ENCODE measurements at regions of chr6 and their contacts with region 1.

Region 1: DNA sequence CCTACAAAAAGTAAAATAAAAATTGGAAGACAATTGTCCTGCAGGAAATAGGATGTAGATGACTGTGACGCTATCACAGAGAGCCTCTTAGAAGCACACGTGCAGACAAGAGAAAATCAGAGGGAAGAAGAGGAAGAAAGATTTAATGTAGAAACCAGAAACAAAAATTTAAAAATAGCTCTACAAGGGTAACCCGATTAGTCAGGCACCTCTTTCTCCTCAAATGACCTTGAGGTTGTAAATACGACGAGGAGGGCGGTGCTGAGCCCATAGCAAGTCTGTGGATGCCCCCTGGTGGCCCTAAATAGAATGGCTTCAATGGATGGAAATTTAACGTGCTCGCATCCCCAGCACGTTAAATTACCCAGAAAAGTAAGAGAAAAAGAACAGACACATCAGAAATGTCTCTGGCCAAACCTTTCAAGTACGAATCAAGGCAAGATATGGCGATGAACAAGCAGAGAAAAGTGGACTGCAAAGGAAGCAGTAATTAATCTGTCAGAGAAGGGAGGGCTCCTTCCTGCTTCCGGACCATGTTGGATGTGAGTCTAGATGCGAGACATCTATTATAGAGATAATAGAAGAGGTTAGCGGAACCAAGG is 4.2 kb upstream of the PRPH2 start:
- DNase-seq: peak; percentile 64
- H3K4me3 ChIP-seq: peak overlapping the region; percentile 33 to 45 (median 39)
- H3K27ac ChIP-seq: no peak overlapping the region
- H3K4me1 ChIP-seq: peaks cover 13% of the 10 kb centered on the region
- H3K27me3 ChIP-seq: no peaks in the 10 kb centered on the region
- CTCF ChIP-seq: peak; percentile 81 to 88

Region 2: DNA sequence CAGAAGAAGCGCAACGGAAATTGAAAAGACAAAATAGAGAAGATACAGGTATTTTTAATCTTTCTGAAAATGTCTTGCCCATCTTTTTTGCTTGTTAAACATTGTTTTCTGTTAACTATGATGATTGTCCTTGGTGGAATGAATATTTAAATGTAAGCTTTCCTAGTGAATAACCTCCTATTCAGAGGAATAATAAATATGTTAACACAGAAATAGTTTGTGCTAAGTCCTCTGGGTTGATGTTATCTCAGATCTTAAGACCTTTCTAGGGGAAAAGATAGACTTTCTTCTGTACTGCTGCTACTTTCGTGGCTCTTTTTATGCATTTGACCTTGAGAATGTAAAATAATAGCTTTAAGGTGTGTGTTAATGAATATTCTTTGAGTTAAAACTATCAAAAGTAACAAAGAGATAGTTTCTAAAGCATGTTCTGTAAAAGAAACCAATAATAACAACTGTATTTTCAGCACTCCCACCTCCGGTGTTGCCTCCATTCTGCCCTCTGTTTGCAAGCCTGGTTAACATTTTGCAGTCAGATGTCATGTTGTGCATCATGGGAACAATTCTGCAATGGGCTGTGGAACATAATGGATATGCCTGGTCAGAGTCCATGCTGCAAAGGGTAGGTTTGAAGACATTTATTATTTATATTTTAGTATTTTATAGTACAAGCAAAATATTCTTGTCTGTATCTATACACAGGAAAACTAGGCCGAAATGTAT is 74.4 kb before region 1 on chr6:
- CTCF ChIA-PET with region 1: no interaction called
- dilution Hi-C with region 1: loop called (anchors 5 kb)
- in situ Hi-C with region 1: no loop called
- intact Hi-C with region 1: no loop called
- DNase-seq: no peak
- H3K4me3 ChIP-seq: no peak overlapping the region
- H3K27ac ChIP-seq: no peak overlapping the region
- H3K4me1 ChIP-seq: no peaks in the 10 kb centered on the region
- H3K27me3 ChIP-seq: no peaks in the 10 kb centered on the region
- CTCF ChIP-seq: no peak

Region 3: DNA sequence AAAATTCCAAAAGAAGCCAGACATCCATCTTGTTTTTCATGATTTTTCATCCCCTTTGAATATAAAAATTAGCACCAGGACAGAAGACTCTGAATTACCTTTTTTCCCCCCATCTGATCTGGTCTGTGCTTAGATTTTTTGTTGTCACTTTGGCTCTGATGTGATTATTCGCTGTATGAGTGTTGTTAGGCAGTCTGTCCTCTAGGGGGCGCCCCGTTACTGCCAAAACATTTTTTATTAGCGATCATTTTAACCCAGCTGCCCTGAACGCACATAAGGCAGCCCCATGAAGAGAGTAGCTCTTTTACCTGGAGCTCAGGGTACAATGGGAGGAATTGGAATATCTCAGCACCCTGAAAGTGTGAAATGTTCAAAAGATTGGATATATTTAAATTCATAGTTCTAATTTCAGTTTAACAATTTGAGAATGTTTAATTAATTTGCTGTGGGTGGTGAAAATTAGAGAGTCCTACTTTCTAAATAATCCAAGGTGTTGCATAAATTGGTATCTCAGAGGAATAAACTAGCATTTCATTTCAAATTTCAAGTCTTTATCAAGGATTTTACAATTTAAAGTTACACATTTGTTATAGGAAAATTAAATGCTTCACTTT is 64.9 kb before region 1 on chr6:
- CTCF ChIA-PET with region 1: no interaction called
- dilution Hi-C with region 1: no loop called
- in situ Hi-C with region 1: loop called in 1 of 2 experiments (anchors 10 kb)
- intact Hi-C with region 1: loop called (anchors 1 kb)
- DNase-seq: peak; percentile 51
- H3K4me3 ChIP-seq: no peak overlapping the region
- H3K27ac ChIP-seq: no peak overlapping the region
- H3K4me1 ChIP-seq: no peaks in the 10 kb centered on the region
- H3K27me3 ChIP-seq: no peaks in the 10 kb centered on the region
- CTCF ChIP-seq: peak; percentile 76 to 86

Region 4: DNA sequence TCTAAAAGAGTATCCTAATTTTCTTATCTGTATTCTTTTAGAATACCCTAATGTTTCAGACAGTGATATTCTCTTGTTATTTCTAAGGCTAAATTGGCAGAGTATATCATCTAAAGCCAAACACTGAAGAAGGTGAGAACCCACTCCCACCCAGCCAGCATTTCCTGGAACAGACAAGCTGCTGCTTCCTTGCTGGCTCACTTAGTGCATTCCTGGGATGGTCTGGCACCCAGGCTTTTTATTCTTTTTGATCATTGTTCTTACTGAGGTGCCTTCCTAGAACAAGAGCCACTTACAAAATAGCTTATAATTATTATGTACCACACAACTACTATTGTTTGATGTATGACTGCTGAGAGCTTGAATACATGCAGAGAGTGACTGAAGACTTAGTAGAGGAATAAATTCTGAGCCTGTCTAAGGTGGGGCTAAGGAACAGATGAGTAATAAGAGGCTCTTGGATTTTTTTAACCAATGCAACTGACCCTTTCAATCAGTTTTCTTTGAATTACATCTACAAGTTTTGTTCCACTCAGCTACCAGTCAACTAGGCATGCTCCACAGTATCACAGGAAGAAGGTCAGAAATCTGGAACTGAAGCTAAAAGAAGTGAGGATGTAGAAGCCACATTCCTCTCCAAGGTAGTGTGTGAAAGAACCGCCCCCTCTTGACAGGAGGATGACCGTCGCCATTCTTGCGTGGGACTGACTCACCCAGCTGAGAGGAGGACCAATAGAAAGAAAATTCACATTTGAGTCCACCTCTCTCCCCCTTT is 34.3 kb before region 1 on chr6:
- CTCF ChIA-PET with region 1: interaction called, 3 read pairs
- dilution Hi-C with region 1: no loop called
- in situ Hi-C with region 1: no loop called
- intact Hi-C with region 1: loop called (anchors 1 kb)
- DNase-seq: peak; percentile 80
- H3K4me3 ChIP-seq: no peak overlapping the region
- H3K27ac ChIP-seq: peak overlapping the region; percentile 71
- H3K4me1 ChIP-seq: peaks cover 31% of the 10 kb centered on the region
- H3K27me3 ChIP-seq: no peaks in the 10 kb centered on the region
- CTCF ChIP-seq: no peak

Region 5: GRCh38 chr6:42714098-42714761 is 12.4 kb before region 1 on chr6:
- CTCF ChIA-PET with region 1: no interaction called
- dilution Hi-C with region 1: no loop called
- in situ Hi-C with region 1: no loop called
- intact Hi-C with region 1: no loop called
- DNase-seq: peak; percentile 43
- H3K4me3 ChIP-seq: no peak overlapping the region
- H3K27ac ChIP-seq: no peak overlapping the region
- H3K4me1 ChIP-seq: peaks cover 3% of the 10 kb centered on the region
- H3K27me3 ChIP-seq: no peaks in the 10 kb centered on the region
- CTCF ChIP-seq: no peak

Region 6: DNA sequence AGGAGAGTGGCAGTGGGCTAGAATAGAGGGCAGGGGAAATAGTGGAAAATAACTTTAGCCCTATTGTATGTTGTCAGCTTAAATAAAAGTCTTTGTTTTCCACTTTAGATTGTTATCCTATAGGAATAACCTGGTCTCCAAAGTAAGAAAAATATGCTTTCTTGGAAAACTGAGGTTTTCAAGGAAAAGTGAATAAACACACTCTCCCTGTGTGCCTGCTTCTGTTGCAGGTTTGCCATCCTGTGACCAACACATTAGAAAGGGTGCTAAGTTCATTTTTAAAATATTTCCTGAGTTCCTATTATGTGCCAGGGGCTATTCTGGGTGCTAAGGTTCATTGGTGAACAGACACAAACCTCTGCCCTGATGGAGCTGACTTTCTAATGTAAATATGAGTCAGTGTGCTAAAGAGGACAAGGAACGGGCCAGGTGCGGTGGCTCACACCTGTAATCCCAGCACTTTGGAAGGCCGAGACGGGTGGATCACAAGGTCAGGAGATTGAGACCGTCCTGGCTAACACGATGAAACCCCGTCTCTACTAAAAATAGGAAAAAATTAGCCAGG is 78.8 kb after region 1 on chr6:
- CTCF ChIA-PET with region 1: no interaction called
- dilution Hi-C with region 1: no loop called
- in situ Hi-C with region 1: no loop called
- intact Hi-C with region 1: no loop called
- DNase-seq: no peak
- H3K4me3 ChIP-seq: no peak overlapping the region
- H3K27ac ChIP-seq: no peak overlapping the region
- H3K4me1 ChIP-seq: peaks cover 7% of the 10 kb centered on the region
- H3K27me3 ChIP-seq: no peaks in the 10 kb centered on the region
- CTCF ChIP-seq: no peak

Region 7: GRCh38 chr6:43274916-43275597 is 548.5 kb after region 1 on chr6:
- CTCF ChIA-PET with region 1: no interaction called
- dilution Hi-C with region 1: no loop called
- in situ Hi-C with region 1: no loop called
- intact Hi-C with region 1: no loop called
- DNase-seq: no peak
- H3K4me3 ChIP-seq: peak overlapping the region in 1 of 3 experiments; percentile 24
- H3K27ac ChIP-seq: no peak overlapping the region
- H3K4me1 ChIP-seq: no peaks in the 10 kb centered on the region
- H3K27me3 ChIP-seq: peaks cover 6% of the 10 kb centered on the region
- CTCF ChIP-seq: no peak

Measured in mammary epithelial cell (primary cell).